K562 (cell line): ENCODE measurements at regions of chr3 and their contacts with region 1.

Region 1: DNA sequence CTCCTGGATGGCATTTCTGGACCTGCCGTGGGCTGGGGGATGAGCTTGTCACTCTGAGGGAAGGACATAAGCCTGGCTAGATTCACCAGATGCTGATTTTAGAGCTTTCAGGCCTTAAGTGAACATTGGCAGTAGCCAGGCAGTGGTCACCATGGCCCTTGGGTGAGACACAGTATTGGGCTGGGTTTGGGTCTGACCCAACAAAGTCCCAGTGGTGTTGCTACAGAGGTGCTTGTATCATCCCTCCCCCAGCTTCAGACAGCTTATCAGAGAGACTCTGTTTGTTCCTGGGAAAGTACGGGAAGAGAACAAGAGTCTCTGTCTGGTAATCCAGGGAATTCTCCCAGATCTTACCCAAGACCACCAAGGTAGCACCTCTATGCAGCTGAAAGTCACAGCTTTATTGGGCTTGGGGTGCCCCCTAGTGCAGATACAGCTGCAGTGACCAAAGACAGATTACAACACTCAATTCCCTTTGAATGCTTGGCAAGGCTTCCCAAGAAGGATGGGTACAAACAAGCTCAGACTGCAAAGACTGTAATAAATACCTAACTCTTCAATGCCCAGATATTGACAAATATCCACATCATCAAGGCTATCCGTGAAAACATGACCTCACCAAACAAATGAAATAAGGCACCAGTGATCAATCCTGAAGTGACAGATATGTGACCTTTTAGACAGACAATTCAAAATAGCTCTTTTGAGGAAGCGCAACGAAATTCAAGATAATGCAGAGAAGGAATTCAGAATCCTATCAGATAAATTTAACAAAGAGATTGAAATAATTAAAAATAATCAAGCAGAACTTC is 9.9 kb upstream of the RUVBL1 start:
- DNase-seq: peak in 1 of 4 experiments; percentile 56
- ATAC-seq: peak; percentile 92
- H3K4me3 ChIP-seq: no peak overlapping the region
- H3K27ac ChIP-seq: no peak overlapping the region
- H3K4me1 ChIP-seq: peaks cover 0 to 1% of the 10 kb centered on the region in 2 experiments; a peak in 2 of 5 replicates
- H3K27me3 ChIP-seq: no peaks in the 10 kb centered on the region
- CTCF ChIP-seq: peak; percentile 66 to 81 (median 72)
- EP300 ChIP-seq: no peak
- POLR2A ChIP-seq: no peak
- RAD21 ChIP-seq: peak; percentile 43 to 91

Region 2: GRCh38 chr3:127652231-127652995 is 481.1 kb before region 1 on chr3:
- CTCF ChIA-PET with region 1: no interaction called
- POLR2A ChIA-PET with region 1: no interaction called
- in situ Hi-C with region 1: no loop called
- intact Hi-C with region 1: loop called (anchors 10 kb)
- DNase-seq: peak; percentile 47 to 56 (median 52)
- ATAC-seq: peak; percentile 90
- H3K4me3 ChIP-seq: no peak overlapping the region
- H3K27ac ChIP-seq: no peak overlapping the region
- H3K4me1 ChIP-seq: no peaks in the 10 kb centered on the region
- H3K27me3 ChIP-seq: no peaks in the 10 kb centered on the region
- CTCF ChIP-seq: peak; percentile 67 to 74 (median 67)
- EP300 ChIP-seq: no peak
- POLR2A ChIP-seq: no peak
- RAD21 ChIP-seq: peak; percentile 59 to 69

Region 3: GRCh38 chr3:127857333-127857732 is 276.1 kb before region 1 on chr3:
- CTCF ChIA-PET with region 1: interaction called, 4 read pairs
- POLR2A ChIA-PET with region 1: no interaction called
- in situ Hi-C with region 1: loop called (anchors 10 kb)
- intact Hi-C with region 1: no loop called
- DNase-seq: no peak
- ATAC-seq: no peak
- H3K4me3 ChIP-seq: no peak overlapping the region
- H3K27ac ChIP-seq: no peak overlapping the region
- H3K4me1 ChIP-seq: no peaks in the 10 kb centered on the region
- H3K27me3 ChIP-seq: peaks cover 4 to 27% of the 10 kb centered on the region in 2 experiments; a peak in 3 of 5 replicates
- CTCF ChIP-seq: no peak
- EP300 ChIP-seq: no peak
- POLR2A ChIP-seq: no peak
- RAD21 ChIP-seq: no peak

Region 4: GRCh38 chr3:127984241-127984975 is 149.1 kb before region 1 on chr3:
- CTCF ChIA-PET with region 1: no interaction called
- POLR2A ChIA-PET with region 1: no interaction called
- in situ Hi-C with region 1: no loop called
- intact Hi-C with region 1: loop called (anchors 10 kb)
- DNase-seq: no peak
- ATAC-seq: no peak
- H3K4me3 ChIP-seq: no peak overlapping the region
- H3K27ac ChIP-seq: no peak overlapping the region
- H3K4me1 ChIP-seq: no peaks in the 10 kb centered on the region
- H3K27me3 ChIP-seq: peaks cover 4 to 44% of the 10 kb centered on the region in 2 experiments; a peak in 4 of 5 replicates
- CTCF ChIP-seq: no peak
- EP300 ChIP-seq: no peak
- POLR2A ChIP-seq: no peak
- RAD21 ChIP-seq: no peak

Region 5: GRCh38 chr3:128075516-128076482 is 57.7 kb before region 1 on chr3:
- CTCF ChIA-PET with region 1: no interaction called
- POLR2A ChIA-PET with region 1: interaction called, 3 read pairs
- in situ Hi-C with region 1: no loop called
- intact Hi-C with region 1: loop called (anchors 2 kb)
- DNase-seq: peak; percentile 82 to 90 (median 82)
- ATAC-seq: peak; percentile 82
- H3K4me3 ChIP-seq: peak overlapping the region; percentile 47
- H3K27ac ChIP-seq: peak overlapping the region; percentile 96
- H3K4me1 ChIP-seq: peaks cover 38 to 58% of the 10 kb centered on the region in 2 experiments
- H3K27me3 ChIP-seq: no peaks in the 10 kb centered on the region
- CTCF ChIP-seq: peak; percentile 78 to 92 (median 85)
- EP300 ChIP-seq: 0 out of 2 replicates have a peak, but pooled peaks have one; percentile 12
- POLR2A ChIP-seq: peak; percentile 45
- RAD21 ChIP-seq: peak; percentile 70 to 78

Region 6: DNA sequence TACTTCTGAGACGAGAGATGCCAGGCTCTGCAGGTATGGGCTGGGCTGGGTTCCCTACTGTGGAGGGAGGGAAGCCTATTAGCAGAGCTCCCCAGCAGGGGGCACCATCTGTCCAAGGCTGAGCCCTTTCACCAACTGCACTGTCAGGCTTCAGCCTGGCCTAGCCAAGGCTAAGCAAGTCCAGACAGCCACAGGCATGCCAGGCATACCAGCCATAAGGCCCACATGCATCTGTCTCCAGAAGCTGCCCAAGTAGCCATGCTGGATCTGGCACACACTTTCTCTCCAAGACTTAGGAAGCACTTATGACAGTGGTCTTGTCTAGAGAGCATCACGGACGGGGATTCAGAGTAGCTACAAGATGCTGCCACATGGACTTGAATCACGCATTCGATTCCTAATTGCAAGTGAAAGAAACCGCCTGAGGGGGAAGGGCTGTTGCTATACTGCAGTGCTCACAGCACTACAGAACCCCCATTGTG is 38.2 kb before region 1 on chr3:
- CTCF ChIA-PET with region 1: interaction called, 4 read pairs
- POLR2A ChIA-PET with region 1: no interaction called
- in situ Hi-C with region 1: no loop called
- intact Hi-C with region 1: loop called (anchors 2 kb)
- DNase-seq: peak; percentile 50 to 62 (median 55)
- ATAC-seq: peak; percentile 99
- H3K4me3 ChIP-seq: no peak overlapping the region
- H3K27ac ChIP-seq: no peak overlapping the region
- H3K4me1 ChIP-seq: no peaks in the 10 kb centered on the region
- H3K27me3 ChIP-seq: no peaks in the 10 kb centered on the region
- CTCF ChIP-seq: peak; percentile 57 to 77 (median 73)
- EP300 ChIP-seq: no peak
- POLR2A ChIP-seq: no peak
- RAD21 ChIP-seq: peak; percentile 64 to 72